Caco-2 (cell line): ENCODE measurements at regions of chr2 and their contacts with region 1.

Region 1: GRCh38 chr2:135960656-135961551 is 24.5 kb downstream of the DARS1 start:
- DNase-seq: no peak
- H3K4me3 ChIP-seq: no peak overlapping the region
- H3K4me3 Mint-ChIP-seq: no peak overlapping the region
- H3K27ac Mint-ChIP-seq: no peak overlapping the region
- H3K4me1 ChIP-seq: no peaks in the 10 kb centered on the region
- H3K4me1 Mint-ChIP-seq: no peaks in the 10 kb centered on the region
- H3K27me3 ChIP-seq: no peaks in the 10 kb centered on the region
- H3K27me3 Mint-ChIP-seq: no peaks in the 10 kb centered on the region
- CTCF ChIP-seq: no peak

Region 2: GRCh38 chr2:135741395-135742324 is 219.2 kb before region 1 on chr2 and contains the start of gene UBXN4:
- CTCF ChIA-PET with region 1: interaction called, 10 read pairs
- POLR2A ChIA-PET with region 1: no interaction called
- intact Hi-C with region 1: no loop called
- DNase-seq: peak; percentile 96 to 99
- H3K4me3 ChIP-seq: peak within 1 kb of the TSS; percentile 92
- H3K4me3 Mint-ChIP-seq: peak within 1 kb of the TSS; percentile 90
- H3K27ac Mint-ChIP-seq: peak within 1 kb of the TSS; percentile 89
- H3K4me1 ChIP-seq: peaks cover 18% of the 10 kb centered on the region; the same call in 1 of the 2 replicates
- H3K4me1 Mint-ChIP-seq: peaks cover 8% of the 10 kb centered on the region
- H3K27me3 ChIP-seq: no peaks in the 10 kb centered on the region
- H3K27me3 Mint-ChIP-seq: no peaks in the 10 kb centered on the region
- CTCF ChIP-seq: peak; percentile 55 to 64
- total RNA-seq, gene UBXN4: 98.1 and 99.3 TPM in 2 replicates

Region 3: DNA sequence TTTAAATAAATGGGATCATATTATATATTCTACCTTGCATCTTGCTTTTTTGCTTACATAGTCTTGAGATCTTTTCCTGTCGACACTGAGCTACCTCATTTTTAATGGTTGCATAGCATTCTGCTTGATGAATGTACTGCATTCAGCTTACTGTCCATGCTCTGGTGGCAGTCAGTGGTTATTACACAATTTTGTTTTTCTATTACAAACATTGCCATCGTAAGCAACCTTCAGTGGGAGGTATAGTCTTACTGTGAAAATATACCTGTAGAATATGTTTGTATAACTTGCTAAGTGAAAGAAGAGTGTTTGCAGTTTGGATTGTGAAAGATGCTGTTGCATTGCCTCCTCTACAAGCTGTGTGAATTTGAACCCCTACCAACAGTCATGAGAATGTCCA is 175.9 kb before region 1 on chr2:
- CTCF ChIA-PET with region 1: no interaction called
- POLR2A ChIA-PET with region 1: no interaction called
- intact Hi-C with region 1: no loop called
- DNase-seq: no peak
- H3K4me3 ChIP-seq: no peak overlapping the region
- H3K4me3 Mint-ChIP-seq: no peak overlapping the region
- H3K27ac Mint-ChIP-seq: no peak overlapping the region
- H3K4me1 ChIP-seq: no peaks in the 10 kb centered on the region
- H3K4me1 Mint-ChIP-seq: no peaks in the 10 kb centered on the region
- H3K27me3 ChIP-seq: no peaks in the 10 kb centered on the region
- H3K27me3 Mint-ChIP-seq: no peaks in the 10 kb centered on the region
- CTCF ChIP-seq: peak in 1 of 2 experiments; percentile 12